ENCODE measurements at regions of chr3 and their contacts with region 1.

Region 1: DNA sequence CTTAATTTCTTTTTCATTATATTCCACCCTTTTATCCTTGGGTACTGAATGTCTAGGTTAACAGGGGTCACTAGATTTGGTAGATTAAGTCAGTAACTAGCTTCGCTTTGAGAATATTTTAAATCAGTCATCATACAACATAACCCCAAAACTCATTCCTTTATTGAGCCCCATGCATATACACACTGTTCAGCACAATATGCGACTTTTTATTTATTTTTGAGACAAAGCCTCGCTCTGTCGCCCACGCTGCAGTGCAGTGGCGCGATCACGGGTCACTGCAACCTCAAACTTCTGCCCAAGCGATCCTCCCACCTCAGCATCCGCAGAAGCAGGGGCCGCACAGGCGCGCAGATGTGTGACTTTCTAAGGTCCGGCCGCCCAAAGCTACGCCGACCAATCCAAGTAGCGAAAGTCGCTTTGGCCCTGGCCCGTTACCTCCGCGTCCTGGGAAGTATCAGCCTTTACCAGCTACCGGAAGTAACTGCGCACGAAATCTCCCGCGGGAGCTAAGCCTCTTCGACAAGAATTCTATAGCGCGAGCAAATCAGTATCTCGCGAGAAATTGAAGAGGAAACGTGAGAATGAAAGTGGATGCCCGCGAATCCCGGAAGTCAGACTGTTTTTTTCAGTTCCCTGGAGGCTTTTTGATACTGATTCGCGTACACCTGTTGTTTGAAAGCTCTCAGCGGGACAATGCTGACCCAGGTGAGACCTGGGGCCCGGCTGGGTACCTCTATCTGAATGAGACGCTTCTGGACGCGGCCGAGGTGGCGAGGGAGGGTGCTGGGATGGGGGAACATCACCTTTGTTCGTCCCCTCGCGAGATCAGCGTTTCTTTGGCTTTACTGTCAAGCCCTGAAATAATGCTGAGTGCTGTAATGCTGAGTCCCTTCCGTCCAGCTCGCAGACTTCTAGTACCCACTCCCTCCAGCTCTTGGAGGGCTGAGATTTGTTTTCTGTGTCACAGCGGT is at the starts of genes DHFR2 and NSUN3:
- DNase-seq: peak; percentile 98
- H3K4me3 Mint-ChIP-seq: peak within 1 kb of the TSS; percentile 92
- H3K27ac Mint-ChIP-seq: peak within 1 kb of the TSS; percentile 99
- H3K4me1 Mint-ChIP-seq: peaks cover 14% of the 10 kb centered on the region
- H3K27me3 Mint-ChIP-seq: no peaks in the 10 kb centered on the region
- CTCF ChIP-seq: no peak
- total RNA-seq, gene DHFR2: 3.4 and 5.0 TPM in 2 replicates
- total RNA-seq, gene NSUN3: 10.6 and 13.0 TPM in 2 replicates

Region 2: DNA sequence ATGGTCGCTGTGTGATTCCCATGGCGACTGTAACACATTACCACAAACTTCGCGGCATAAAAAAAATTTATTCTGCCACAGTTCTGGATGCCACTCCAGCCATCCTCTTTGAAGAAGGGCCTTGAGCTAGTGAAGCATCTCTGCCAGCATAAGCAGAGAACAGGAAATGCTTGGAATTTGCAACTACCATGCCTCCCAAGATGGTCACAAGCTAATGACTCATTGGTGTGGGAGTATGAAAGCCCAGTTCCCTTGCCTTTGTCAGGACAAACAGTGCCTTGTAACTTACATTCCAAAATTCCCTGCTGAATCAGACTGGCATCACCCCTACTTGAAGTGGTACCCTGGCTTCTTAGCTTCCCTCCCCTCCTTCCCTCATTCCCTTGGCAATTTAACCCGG is 218.7 kb before region 1 on chr3:
- CTCF ChIA-PET with region 1: no interaction called
- POLR2A ChIA-PET with region 1: no interaction called
- intact Hi-C with region 1: loop called (anchors 10 kb)
- DNase-seq: peak; percentile 86
- H3K4me3 Mint-ChIP-seq: no peak overlapping the region
- H3K27ac Mint-ChIP-seq: peak overlapping the region; percentile 90
- H3K4me1 Mint-ChIP-seq: peaks cover 12% of the 10 kb centered on the region
- H3K27me3 Mint-ChIP-seq: no peaks in the 10 kb centered on the region
- CTCF ChIP-seq: no peak

Region 3: DNA sequence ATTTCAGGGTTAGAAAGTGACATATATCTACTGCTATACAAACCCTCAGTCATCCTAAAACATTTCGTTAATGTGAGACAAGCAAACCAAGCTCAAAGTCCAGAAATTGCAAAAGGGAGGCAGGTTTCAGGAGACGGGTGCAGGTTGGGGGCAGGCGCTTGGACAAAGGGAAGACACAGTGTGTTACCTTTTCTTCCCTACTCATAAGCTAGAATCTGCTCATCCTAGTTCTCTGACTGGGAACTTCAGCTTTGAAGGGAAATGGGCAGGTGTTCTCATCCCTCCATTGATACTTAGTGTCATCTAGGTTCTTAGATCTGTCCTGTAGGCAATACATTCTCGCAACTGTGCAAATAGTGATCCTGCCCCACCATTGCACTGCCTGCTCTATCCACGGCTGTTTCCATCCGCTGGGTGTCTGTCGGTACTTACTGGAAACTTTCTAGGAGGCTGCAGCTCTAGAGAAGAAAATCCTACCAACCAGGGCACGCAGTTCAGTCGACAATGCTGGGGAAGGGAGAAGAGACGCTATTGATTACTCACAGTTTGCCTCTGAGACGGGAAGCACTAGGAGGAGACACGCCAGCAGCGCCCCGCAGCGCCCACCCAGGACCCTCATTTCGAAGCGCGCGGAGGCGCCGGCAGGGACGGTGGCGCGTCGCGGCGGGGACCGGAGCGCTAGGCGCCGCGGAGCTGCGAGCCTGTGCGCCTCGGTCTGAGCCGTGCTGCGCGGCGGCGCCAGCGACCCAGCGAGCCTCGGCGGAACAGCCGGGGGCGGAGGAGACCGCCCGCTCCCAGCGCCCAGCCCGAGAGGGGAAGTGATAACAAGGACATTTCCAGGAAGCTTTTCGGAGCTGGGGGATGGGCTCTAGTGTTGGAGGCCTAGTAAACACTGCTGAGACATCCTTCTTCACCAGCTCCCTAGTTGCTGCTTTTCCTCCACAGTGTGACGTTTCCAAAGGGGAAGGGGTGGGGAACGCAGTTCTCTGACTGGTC is 89.3 kb before region 1 on chr3 and contains the start of gene PROS1:
- CTCF ChIA-PET with region 1: no interaction called
- POLR2A ChIA-PET with region 1: interaction called, 12 read pairs
- intact Hi-C with region 1: no loop called
- DNase-seq: peak; percentile 80
- H3K4me3 Mint-ChIP-seq: peak within 1 kb of the TSS; percentile 85
- H3K27ac Mint-ChIP-seq: peak within 1 kb of the TSS; percentile 80
- H3K4me1 Mint-ChIP-seq: peaks cover 15% of the 10 kb centered on the region
- H3K27me3 Mint-ChIP-seq: no peaks in the 10 kb centered on the region
- CTCF ChIP-seq: no peak
- total RNA-seq, gene PROS1: 15.6 and 17.4 TPM in 2 replicates

Region 4: GRCh38 chr3:94004301-94004910 is 58.3 kb before region 1 on chr3:
- CTCF ChIA-PET with region 1: interaction called, 5 read pairs
- POLR2A ChIA-PET with region 1: interaction called, 16 read pairs
- intact Hi-C with region 1: no loop called
- DNase-seq: peak; percentile 65
- H3K4me3 Mint-ChIP-seq: peak overlapping the region; percentile 63
- H3K27ac Mint-ChIP-seq: peak overlapping the region; percentile 77
- H3K4me1 Mint-ChIP-seq: no peaks in the 10 kb centered on the region
- H3K27me3 Mint-ChIP-seq: no peaks in the 10 kb centered on the region
- CTCF ChIP-seq: peak; percentile 70

Region 5: GRCh38 chr3:94050546-94050945 is 12.2 kb before region 1 on chr3:
- CTCF ChIA-PET with region 1: interaction called, 4 read pairs
- POLR2A ChIA-PET with region 1: interaction called, 11 read pairs
- intact Hi-C with region 1: no loop called
- DNase-seq: no peak
- H3K4me3 Mint-ChIP-seq: no peak overlapping the region
- H3K27ac Mint-ChIP-seq: no peak overlapping the region
- H3K4me1 Mint-ChIP-seq: no peaks in the 10 kb centered on the region
- H3K27me3 Mint-ChIP-seq: no peaks in the 10 kb centered on the region
- CTCF ChIP-seq: no peak

Region 6: GRCh38 chr3:94185753-94186152 is 123.0 kb after region 1 on chr3:
- CTCF ChIA-PET with region 1: no interaction called
- POLR2A ChIA-PET with region 1: no interaction called
- intact Hi-C with region 1: no loop called
- DNase-seq: peak; percentile 17
- H3K4me3 Mint-ChIP-seq: no peak overlapping the region
- H3K27ac Mint-ChIP-seq: no peak overlapping the region
- H3K4me1 Mint-ChIP-seq: peaks cover 8% of the 10 kb centered on the region
- H3K27me3 Mint-ChIP-seq: no peaks in the 10 kb centered on the region
- CTCF ChIP-seq: no peak